Activated CD8-positive, alpha-beta memory T cell treated with anti-CD3 and anti-CD28 coated beads, Interleukin-2, amount 10 ng/mL, durations not matched to agents 7 days and 5 days (primary cell): ENCODE measurements at regions of chr3 and their contacts with region 1.

Region 1: DNA sequence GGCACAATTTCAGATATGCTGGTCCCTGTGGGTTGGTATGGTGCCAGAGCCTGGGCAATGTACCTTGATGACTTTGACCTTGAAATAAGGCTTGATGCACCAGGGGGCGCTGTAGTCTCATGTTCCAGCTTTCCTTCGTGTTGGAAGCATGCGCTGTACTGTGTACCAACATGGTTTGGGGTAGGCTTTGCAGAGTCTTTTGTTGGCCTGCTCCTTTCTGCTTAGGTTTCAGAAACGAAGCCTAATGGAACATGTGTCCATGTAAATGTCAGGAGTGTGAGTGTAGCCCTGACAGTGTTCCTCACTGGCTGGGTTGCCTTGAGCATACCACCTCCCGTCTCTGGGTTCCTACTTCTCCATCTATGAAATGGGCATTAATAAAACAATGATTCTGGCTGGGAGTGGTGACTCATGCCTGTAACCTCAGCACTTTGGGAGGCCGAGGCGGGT is 3.6 kb upstream of the CCR4 start:
- DNase-seq: peak; percentile 95
- ATAC-seq: peak; percentile 83
- H3K4me3 Mint-ChIP-seq: no peak overlapping the region
- H3K27ac Mint-ChIP-seq: peak overlapping the region; percentile 11
- H3K4me1 Mint-ChIP-seq: peaks cover 43% of the 10 kb centered on the region
- H3K27me3 Mint-ChIP-seq: no peaks in the 10 kb centered on the region

Region 2: DNA sequence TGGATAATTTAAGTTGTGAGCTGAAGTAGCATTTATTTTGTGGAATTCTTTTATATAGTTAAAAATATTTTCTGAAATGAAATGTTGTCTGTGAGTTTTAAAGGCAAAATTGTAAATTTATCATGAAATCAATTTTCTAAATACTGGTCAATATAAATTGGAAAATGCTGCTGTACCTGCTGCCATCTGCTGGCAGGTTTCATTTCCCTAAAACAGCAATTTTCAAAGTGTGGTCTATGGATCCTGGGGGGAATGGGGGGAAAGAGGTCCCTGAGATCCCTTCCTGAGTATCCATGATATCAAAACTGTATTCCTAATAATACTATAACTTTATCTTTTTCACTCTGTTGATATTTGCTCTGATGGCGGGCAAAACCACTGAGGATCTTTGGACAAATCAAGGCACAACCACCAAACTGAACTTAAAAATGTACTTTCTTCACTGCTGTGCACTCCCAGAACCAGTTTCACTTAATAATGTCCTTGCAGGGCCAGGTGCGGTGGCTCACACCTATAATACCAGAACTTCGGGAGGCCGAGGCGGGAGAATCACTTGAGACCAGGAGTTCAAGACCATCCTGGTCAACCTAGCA is 13.6 kb before region 1 on chr3:
- CTCF ChIA-PET with region 1: no interaction called
- DNase-seq: no peak
- ATAC-seq: no peak
- H3K4me3 Mint-ChIP-seq: no peak overlapping the region
- H3K27ac Mint-ChIP-seq: no peak overlapping the region
- H3K4me1 Mint-ChIP-seq: no peaks in the 10 kb centered on the region
- H3K27me3 Mint-ChIP-seq: peaks cover 2% of the 10 kb centered on the region

Region 3: GRCh38 chr3:32973982-32974381 is 26.2 kb after region 1 on chr3:
- CTCF ChIA-PET with region 1: interaction called, 27 read pairs
- DNase-seq: peak; percentile 78
- ATAC-seq: peak; percentile 99
- H3K4me3 Mint-ChIP-seq: no peak overlapping the region
- H3K27ac Mint-ChIP-seq: peak overlapping the region; percentile 85
- H3K4me1 Mint-ChIP-seq: peaks cover 56% of the 10 kb centered on the region
- H3K27me3 Mint-ChIP-seq: no peaks in the 10 kb centered on the region

Region 4: GRCh38 chr3:33047842-33048834 is 100.3 kb after region 1 on chr3:
- CTCF ChIA-PET with region 1: interaction called, 23 read pairs
- DNase-seq: peak; percentile 79
- ATAC-seq: peak; percentile 77
- H3K4me3 Mint-ChIP-seq: peak overlapping the region; percentile 29
- H3K27ac Mint-ChIP-seq: peak overlapping the region; percentile 97
- H3K4me1 Mint-ChIP-seq: peaks cover 79% of the 10 kb centered on the region
- H3K27me3 Mint-ChIP-seq: no peaks in the 10 kb centered on the region

Region 5: DNA sequence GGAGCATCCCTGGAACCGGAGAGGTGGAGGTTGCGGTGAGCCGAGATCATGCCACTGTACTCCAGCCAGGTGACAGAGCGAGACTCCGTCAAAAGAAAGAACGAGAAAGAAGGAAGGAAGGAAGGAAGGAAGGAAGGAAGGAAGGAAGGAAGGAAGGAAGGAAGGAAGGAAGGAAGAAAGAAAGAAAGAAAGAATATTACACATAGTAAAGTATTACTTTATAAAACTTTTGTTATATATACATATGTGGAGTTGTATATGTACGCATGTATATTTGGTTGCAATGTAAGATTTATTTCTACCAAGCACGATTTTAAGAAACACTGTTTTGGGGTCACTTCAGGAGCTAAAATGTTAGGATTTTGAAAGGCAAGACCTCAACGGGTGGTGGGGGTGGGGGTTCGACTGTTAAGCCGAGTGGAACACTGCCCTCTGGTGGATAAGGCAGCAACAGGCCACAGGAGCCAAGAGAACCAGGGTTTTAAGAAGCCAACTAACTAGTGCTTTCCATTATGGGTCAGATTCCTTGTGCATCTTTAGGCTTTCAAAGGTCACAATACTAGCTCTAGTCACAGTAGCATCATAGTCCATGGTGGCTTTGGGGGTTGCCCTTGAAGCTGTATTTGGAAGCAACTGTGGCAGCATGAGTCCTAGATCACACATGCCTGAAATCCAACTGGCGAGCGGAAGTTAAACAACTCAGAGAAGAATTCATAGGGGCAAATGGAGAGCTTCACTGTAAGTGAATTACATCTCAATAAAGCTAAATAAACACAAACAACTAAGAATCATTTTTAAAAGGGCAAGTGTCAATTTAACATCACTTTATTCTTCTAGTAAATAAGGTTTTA is 126.6 kb after region 1 on chr3:
- CTCF ChIA-PET with region 1: interaction called, 203 read pairs
- DNase-seq: peak; percentile 82
- ATAC-seq: peak; percentile 76
- H3K4me3 Mint-ChIP-seq: no peak overlapping the region
- H3K27ac Mint-ChIP-seq: no peak overlapping the region
- H3K4me1 Mint-ChIP-seq: peaks cover 46% of the 10 kb centered on the region
- H3K27me3 Mint-ChIP-seq: no peaks in the 10 kb centered on the region

Region 6: GRCh38 chr3:33372218-33373081 is 424.6 kb after region 1 on chr3:
- CTCF ChIA-PET with region 1: interaction called, 17 read pairs
- DNase-seq: peak; percentile 65
- ATAC-seq: peak; percentile 74
- H3K4me3 Mint-ChIP-seq: no peak overlapping the region
- H3K27ac Mint-ChIP-seq: no peak overlapping the region
- H3K4me1 Mint-ChIP-seq: peaks cover 8% of the 10 kb centered on the region
- H3K27me3 Mint-ChIP-seq: peaks cover 11% of the 10 kb centered on the region